Lower leg skin (tissue), 4 donors: ENCODE measurements at regions of chr16 and their contacts with region 1.

Region 1: GRCh38 chr16:61083711-61084110 is 952.5 kb downstream of the CDH8 start:
- DNase-seq: no peak
- H3K4me3 ChIP-seq: no peak overlapping the region
- CTCF ChIP-seq: no peak
- POLR2A ChIP-seq: no peak

Region 2: GRCh38 chr16:61413021-61413420 is 329.3 kb after region 1 on chr16:
- intact Hi-C with region 1: no loop called
- DNase-seq: no peak
- H3K4me3 ChIP-seq: no peak overlapping the region
- CTCF ChIP-seq: no peak
- POLR2A ChIP-seq: no peak

Region 3: DNA sequence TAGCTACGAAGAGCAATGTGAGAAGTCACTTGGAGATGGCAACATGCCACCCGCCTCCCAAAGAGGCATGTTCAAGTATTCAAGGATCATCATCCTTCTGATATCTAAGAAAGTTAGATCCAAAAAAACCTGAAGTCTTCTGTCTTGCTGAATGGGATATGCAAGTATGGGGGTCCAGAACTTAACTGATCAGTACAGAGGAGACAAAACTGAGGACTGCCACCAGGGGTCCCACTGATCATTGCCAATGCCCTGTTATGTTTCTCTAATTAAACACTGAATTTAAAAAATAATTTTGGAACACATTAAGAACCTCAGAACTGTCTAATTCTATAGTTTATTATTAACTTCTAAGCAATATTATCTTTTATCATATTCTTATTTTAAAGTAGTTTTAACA is 852.8 kb after region 1 on chr16:
- intact Hi-C with region 1: loop called (anchors 5 kb)
- DNase-seq: no peak
- H3K4me3 ChIP-seq: no peak overlapping the region
- CTCF ChIP-seq: no peak
- POLR2A ChIP-seq: no peak